ENCODE measurements at regions of chr12 and their contacts with region 1.

Region 1: GRCh38 chr12:120944645-120945231 is 33.6 kb upstream of the HNF1A start:
- DNase-seq: peak; percentile 30
- H3K4me3 ChIP-seq: no peak overlapping the region
- H3K27ac ChIP-seq: no peak overlapping the region
- H3K4me1 ChIP-seq: no peaks in the 10 kb centered on the region
- H3K27me3 ChIP-seq: no peaks in the 10 kb centered on the region
- CTCF ChIP-seq: peak; percentile 81 to 89

Region 2: DNA sequence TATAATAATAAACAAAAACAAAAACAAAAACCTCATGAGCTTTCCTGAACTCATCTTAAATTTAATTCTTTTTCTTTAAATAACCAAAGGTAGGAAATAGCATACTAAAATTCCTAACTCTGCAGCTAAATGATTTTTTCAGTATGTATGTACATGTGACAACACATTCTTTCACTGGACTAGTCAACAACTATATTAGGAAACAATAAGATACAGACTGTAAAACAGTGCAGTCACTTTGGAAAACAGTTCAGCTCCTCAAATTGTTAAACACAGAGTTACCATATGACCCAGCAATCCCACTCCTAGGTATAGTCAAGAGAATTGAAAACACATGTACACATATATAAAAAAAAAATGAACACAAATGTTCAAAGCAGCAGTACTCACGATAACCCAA is 105.2 kb before region 1 on chr12:
- CTCF ChIA-PET with region 1: interaction called, 47 read pairs
- dilution Hi-C with region 1: no loop called
- in situ Hi-C with region 1: no loop called
- intact Hi-C with region 1: no loop called
- DNase-seq: no peak
- H3K4me3 ChIP-seq: no peak overlapping the region
- H3K27ac ChIP-seq: no peak overlapping the region
- H3K4me1 ChIP-seq: no peaks in the 10 kb centered on the region
- H3K27me3 ChIP-seq: no peaks in the 10 kb centered on the region
- CTCF ChIP-seq: no peak